ENCODE measurements at regions of chr5 and their contacts with region 1.

Region 1: GRCh38 chr5:42423285-42424165 is at the start of gene GHR:
- DNase-seq: peak; percentile 86 to 92
- ATAC-seq: peak; percentile 95
- H3K4me3 ChIP-seq: peak within 1 kb of the TSS; percentile 84 to 85
- H3K27ac ChIP-seq: peak within 1 kb of the TSS; percentile 50 to 71
- H3K4me1 ChIP-seq: peaks cover 0 to 2% of the 10 kb centered on the region in 2 donors
- H3K27me3 ChIP-seq: no peaks in the 10 kb centered on the region
- total RNA-seq, gene GHR: 10.9 to 17.1 TPM

Region 2: DNA sequence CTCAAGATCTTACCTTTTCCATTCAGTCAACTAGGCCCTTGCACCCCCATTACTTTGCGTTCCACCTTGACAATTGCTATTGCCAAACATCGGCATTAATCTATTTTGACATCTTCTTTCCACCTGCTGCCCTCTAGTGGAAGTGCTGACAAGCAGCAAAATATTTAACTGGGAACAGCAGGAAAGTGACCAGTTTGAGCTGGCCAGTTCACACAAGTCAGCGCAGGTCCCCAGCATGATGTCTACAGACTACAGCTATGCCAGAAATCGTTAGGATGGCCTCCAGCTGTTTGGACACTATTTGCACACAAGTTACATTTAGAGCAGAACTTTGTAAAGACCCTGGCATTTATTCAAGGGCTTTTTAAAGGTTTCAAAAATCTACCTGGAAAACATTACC is 159.8 kb after region 1 on chr5:
- intact Hi-C with region 1: loop called (anchors 1 kb)
- DNase-seq: peak in 1 of 2 donors; percentile 51
- ATAC-seq: peak; percentile 58
- H3K4me3 ChIP-seq: no peak overlapping the region
- H3K27ac ChIP-seq: no peak overlapping the region
- H3K4me1 ChIP-seq: peaks cover 2 to 3% of the 10 kb centered on the region in 2 donors
- H3K27me3 ChIP-seq: no peaks in the 10 kb centered on the region

Region 3: DNA sequence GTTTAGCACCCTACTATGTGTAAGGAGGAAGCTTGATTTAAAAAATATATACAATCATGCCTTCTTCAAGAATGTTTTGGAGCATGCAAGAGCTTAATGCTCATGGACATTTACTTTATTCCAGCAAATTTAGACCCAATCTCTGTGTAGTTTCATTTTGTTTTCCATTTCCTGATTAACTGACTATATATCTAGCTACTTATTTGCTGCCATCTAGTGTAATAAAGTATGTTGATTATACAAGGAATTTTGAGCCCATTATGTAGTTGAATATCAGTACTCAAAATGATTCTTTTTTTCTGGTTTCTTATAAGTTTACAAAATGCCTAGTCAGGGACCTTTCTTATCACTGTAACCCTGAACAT is 233.1 kb after region 1 on chr5:
- intact Hi-C with region 1: loop called in 1 of 2 experiments (anchors 5 kb)
- DNase-seq: no peak
- ATAC-seq: peak; percentile 62
- H3K4me3 ChIP-seq: no peak overlapping the region
- H3K27ac ChIP-seq: no peak overlapping the region
- H3K4me1 ChIP-seq: peaks cover 0 to 3% of the 10 kb centered on the region in 2 donors
- H3K27me3 ChIP-seq: no peaks in the 10 kb centered on the region